Aorta (tissue), 5 donors: ENCODE measurements at regions of chr13 and their contacts with region 1.

Region 1: DNA sequence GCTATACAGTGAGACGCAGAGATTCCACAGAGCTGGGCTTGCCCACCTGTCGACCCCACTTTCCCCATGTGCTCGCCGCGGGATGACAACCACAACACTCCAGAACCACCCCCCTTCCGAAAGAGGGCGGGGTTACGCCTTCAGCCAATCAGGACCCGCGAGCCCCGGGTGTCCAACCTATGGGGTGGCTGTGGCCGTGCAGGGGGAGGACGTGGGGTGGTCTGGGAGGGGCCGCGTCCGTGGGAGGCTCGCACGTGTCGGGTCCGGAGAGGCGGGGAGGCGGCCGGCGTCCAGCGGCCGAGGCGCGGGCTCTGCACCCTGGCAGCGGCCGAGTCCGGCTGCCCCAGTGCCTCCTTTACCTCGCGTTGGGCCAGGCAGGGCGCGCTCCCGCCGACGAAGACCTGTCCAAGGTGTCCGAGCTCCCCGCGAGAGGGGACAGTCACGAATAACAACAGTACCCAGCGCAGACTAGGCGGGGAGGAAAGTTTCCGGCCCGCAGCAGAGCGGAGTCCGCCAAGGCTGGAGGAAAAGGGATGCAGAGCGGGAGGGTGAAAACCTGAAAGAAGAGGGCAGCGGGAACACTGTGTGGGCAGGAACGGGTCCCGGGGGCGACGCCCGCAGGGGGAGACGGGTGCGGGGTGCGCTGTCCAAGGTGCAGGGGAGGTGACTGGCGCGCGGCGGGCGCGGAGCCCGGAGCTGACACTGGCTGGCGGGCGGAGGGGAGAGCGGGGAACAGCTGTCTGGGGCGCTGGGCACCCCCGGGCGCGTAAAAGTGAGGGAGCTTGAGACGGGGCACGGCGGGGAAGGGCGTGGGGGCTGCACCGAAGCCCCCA is 906 bp downstream of the ENOX1 start:
- DNase-seq: peak; percentile 74 to 90
- ATAC-seq: peak; percentile 88
- H3K4me3 ChIP-seq: peak overlapping the region; percentile 56 to 81
- H3K27ac ChIP-seq: no peak overlapping the region
- H3K4me1 ChIP-seq: no peaks in the 10 kb centered on the region
- H3K27me3 ChIP-seq: no peaks in the 10 kb centered on the region

Region 2: GRCh38 chr13:43303033-43303729 is 482.7 kb before region 1 on chr13:
- intact Hi-C with region 1: loop called in 1 of 2 experiments (anchors 1 kb)
- DNase-seq: peak; percentile 68 to 78
- ATAC-seq: peak; percentile 67
- H3K4me3 ChIP-seq: no peak overlapping the region
- H3K27ac ChIP-seq: no peak overlapping the region
- H3K4me1 ChIP-seq: no peaks in the 10 kb centered on the region
- H3K27me3 ChIP-seq: no peaks in the 10 kb centered on the region